Activated CD4-positive, alpha-beta T cell treated with anti-CD3 and anti-CD28 coated beads, Interleukin-2, amount 10 ng/mL, durations not matched to agents 24 days and 14 days (primary cell): ENCODE measurements at regions of chr13 and their contacts with region 1.

Region 1: GRCh38 chr13:98576963-98577822 is at the start of gene STK24:
- DNase-seq: peak; percentile 92
- H3K4me3 Mint-ChIP-seq: peak within 1 kb of the TSS; percentile 98
- H3K27ac Mint-ChIP-seq: peak within 1 kb of the TSS; percentile 94
- H3K4me1 Mint-ChIP-seq: peaks cover 43% of the 10 kb centered on the region
- H3K27me3 Mint-ChIP-seq: no peaks in the 10 kb centered on the region
- total RNA-seq, gene STK24: 127 and 136 TPM in 2 replicates

Region 2: DNA sequence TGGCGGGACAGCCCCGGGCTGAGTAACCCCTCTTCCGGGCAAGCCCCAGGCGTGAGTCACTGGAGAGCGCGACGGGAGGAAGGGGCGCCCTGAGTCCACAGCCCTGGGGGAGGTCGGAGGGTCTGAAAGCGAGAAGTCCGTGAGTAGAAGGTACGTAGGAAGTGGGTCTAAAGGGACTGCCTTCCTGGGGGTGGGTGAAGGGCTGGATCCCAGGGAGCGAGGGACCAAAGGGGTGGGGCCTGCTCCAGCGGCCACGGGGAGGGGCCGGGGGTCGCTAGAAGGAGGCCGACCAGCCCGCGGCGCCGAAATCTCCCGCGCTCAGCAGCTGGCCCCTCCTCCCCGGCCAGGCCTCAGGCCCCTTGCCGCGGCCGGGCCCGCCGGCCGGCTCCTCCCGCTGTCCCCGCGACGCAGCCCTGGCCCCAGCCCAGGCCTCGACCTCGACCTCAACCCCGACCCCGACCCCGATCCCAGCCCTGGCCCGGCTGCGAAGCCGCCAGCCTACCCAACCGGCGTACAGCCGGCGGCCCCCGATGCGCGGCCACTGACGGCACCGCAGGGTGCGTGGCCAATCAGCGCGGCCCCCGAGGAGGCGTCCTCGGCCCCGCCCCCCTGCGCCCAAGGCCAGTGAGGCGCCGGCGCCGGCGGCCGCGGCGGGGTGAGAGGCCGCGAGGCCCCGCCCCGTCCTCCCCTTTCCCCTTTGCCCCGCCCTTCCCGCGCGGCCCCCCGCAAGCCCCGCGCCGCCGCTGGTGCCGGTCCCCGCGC is 601.2 kb before region 1 on chr13:
- intact Hi-C with region 1: loop called (anchors 10 kb)
- DNase-seq: peak; percentile 97
- H3K4me3 Mint-ChIP-seq: peak overlapping the region; percentile 92
- H3K27ac Mint-ChIP-seq: peak overlapping the region; percentile 99
- H3K4me1 Mint-ChIP-seq: peaks cover 24% of the 10 kb centered on the region
- H3K27me3 Mint-ChIP-seq: peaks cover 10% of the 10 kb centered on the region

Region 3: GRCh38 chr13:98517576-98518310 is 59.5 kb before region 1 on chr13:
- intact Hi-C with region 1: loop called (anchors 1 kb)
- DNase-seq: peak; percentile 82
- H3K4me3 Mint-ChIP-seq: peak overlapping the region; percentile 67
- H3K27ac Mint-ChIP-seq: peak overlapping the region; percentile 92
- H3K4me1 Mint-ChIP-seq: peaks cover 86% of the 10 kb centered on the region
- H3K27me3 Mint-ChIP-seq: no peaks in the 10 kb centered on the region

Region 4: DNA sequence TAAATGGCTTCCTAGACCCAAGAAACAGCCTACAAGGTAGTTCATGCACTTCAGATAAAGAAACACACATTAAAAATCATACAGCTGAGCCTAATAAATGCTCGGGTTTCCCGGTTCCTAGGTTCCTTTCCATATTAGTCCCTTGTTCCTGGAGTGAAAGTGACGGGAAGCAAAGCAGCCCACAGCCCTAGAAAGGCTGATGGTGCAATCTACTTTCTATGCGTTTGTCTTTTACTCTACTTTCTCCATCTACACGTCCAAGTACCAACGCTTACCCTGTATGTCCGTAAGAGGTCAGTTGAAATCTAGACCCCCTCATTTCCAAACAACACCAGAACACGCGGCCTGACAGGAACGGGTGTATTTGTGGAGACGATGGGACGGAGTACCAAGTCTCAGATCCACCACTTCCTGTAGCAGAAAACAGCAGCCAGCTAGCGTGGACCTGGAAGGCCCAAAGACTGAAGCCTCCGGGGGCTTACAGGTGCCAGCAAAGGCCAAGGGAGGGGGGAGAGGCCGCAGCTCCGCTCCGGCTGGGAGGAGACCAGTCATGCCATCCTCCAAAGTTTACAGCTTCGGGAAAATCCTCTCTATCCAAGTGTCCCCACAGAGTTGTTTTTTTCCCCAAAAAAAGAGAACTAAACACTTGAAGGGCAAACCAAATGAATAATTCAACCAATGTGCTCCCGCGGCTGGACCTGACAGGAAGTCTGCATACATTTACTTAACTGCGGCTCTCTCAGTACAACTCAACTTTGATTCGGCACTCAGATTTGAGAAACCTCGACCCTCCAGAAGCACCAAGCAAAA is 34.4 kb before region 1 on chr13:
- intact Hi-C with region 1: loop called (anchors 1 kb)
- DNase-seq: peak; percentile 74
- H3K4me3 Mint-ChIP-seq: peak overlapping the region; percentile 77
- H3K27ac Mint-ChIP-seq: peak overlapping the region; percentile 75
- H3K4me1 Mint-ChIP-seq: peaks cover 76% of the 10 kb centered on the region
- H3K27me3 Mint-ChIP-seq: no peaks in the 10 kb centered on the region

Region 5: DNA sequence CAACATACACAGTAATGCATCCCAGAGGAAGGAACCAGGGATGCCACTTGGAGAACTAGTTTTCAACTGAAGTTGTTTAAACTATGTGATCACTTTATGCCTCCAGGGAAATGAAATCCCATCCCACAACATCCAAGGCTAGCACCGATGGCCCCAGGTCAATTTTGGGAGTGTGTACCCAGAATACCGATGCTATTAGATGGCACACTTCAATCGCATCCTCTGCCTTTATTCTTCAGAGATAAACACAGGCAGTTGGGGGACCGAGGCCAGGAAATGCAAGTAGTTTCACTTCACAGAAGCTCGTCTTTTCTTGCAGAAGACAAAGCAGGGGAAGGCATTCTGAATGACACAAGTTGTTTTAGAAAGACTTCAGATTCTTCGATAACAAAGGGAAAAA is 14.1 kb before region 1 on chr13:
- intact Hi-C with region 1: loop called (anchors 1 kb)
- DNase-seq: peak; percentile 86
- H3K4me3 Mint-ChIP-seq: peak overlapping the region; percentile 77
- H3K27ac Mint-ChIP-seq: peak overlapping the region; percentile 86
- H3K4me1 Mint-ChIP-seq: peaks cover 77% of the 10 kb centered on the region
- H3K27me3 Mint-ChIP-seq: no peaks in the 10 kb centered on the region

Region 6: GRCh38 chr13:98664039-98664438 is 86.8 kb after region 1 on chr13:
- intact Hi-C with region 1: loop called (anchors 1 kb)
- DNase-seq: peak; percentile 73
- H3K4me3 Mint-ChIP-seq: peak overlapping the region; percentile 5
- H3K27ac Mint-ChIP-seq: peak overlapping the region; percentile 82
- H3K4me1 Mint-ChIP-seq: peaks cover 14% of the 10 kb centered on the region
- H3K27me3 Mint-ChIP-seq: peaks cover 18% of the 10 kb centered on the region